ENCODE measurements at regions of chr1 and their contacts with region 1.

Region 1: GRCh38 chr1:119808972-119809550 is 2.2 kb downstream of the REG4 start:
- DNase-seq: peak; percentile 69
- ATAC-seq: peak; percentile 91
- H3K4me3 ChIP-seq: no peak overlapping the region
- H3K27ac ChIP-seq: no peak overlapping the region
- H3K4me1 ChIP-seq: 0 out of 2 replicates have a peak, but pooled peaks cover 3% of the 10 kb centered on the region
- H3K27me3 ChIP-seq: peaks cover 12% of the 10 kb centered on the region
- CTCF ChIP-seq: peak; percentile 83
- POLR2A ChIP-seq: no peak
- RAD21 ChIP-seq: peak; percentile 87

Region 2: GRCh38 chr1:119318466-119319309 is 490.4 kb before region 1 on chr1:
- CTCF ChIA-PET with region 1: no interaction called
- POLR2A ChIA-PET with region 1: no interaction called
- dilution Hi-C with region 1: no loop called
- in situ Hi-C with region 1: no loop called
- intact Hi-C with region 1: no loop called
- DNase-seq: no peak
- ATAC-seq: no peak
- H3K4me3 ChIP-seq: no peak overlapping the region
- H3K27ac ChIP-seq: no peak overlapping the region
- H3K4me1 ChIP-seq: no peaks in the 10 kb centered on the region
- H3K27me3 ChIP-seq: peaks cover 1% of the 10 kb centered on the region; the same call in 1 of the 2 replicates
- CTCF ChIP-seq: no peak
- POLR2A ChIP-seq: no peak
- RAD21 ChIP-seq: no peak

Region 3: DNA sequence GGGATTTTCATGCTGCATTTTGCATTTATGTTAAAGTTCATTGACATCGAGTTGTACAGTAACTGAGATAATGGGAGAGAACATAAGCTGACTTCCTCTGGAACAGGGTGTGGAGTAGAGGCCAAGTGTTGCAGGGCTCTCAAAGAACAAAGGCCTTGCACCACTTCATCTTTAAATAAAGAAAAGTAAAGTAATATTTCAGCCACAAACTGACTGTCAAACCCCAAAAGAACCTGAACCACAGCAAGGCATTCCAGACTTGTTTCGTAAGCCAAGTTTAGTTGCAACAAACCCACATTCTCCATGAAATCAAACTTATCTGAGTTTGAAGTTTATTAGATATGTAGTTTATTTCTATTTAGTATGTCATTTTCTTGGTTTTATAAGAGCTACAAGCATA is 21.3 kb before region 1 on chr1:
- CTCF ChIA-PET with region 1: no interaction called
- POLR2A ChIA-PET with region 1: no interaction called
- dilution Hi-C with region 1: no loop called
- in situ Hi-C with region 1: no loop called
- intact Hi-C with region 1: loop called (anchors 2 kb)
- DNase-seq: peak; percentile 63
- ATAC-seq: 0 out of 2 replicates have a peak, but pooled peaks have one; percentile 40
- H3K4me3 ChIP-seq: no peak overlapping the region
- H3K27ac ChIP-seq: no peak overlapping the region
- H3K4me1 ChIP-seq: peaks cover 13% of the 10 kb centered on the region
- H3K27me3 ChIP-seq: no peaks in the 10 kb centered on the region
- CTCF ChIP-seq: no peak
- POLR2A ChIP-seq: no peak
- RAD21 ChIP-seq: no peak

Region 4: GRCh38 chr1:119870917-119871596 is 62.0 kb after region 1 on chr1:
- CTCF ChIA-PET with region 1: interaction called, 4 read pairs
- POLR2A ChIA-PET with region 1: no interaction called
- dilution Hi-C with region 1: no loop called
- in situ Hi-C with region 1: no loop called
- intact Hi-C with region 1: loop called (anchors 2 kb)
- DNase-seq: peak; percentile 72
- ATAC-seq: peak; percentile 90
- H3K4me3 ChIP-seq: no peak overlapping the region
- H3K27ac ChIP-seq: no peak overlapping the region
- H3K4me1 ChIP-seq: peaks cover 14% of the 10 kb centered on the region; the same call in 1 of the 2 replicates
- H3K27me3 ChIP-seq: no peaks in the 10 kb centered on the region
- CTCF ChIP-seq: peak; percentile 94
- POLR2A ChIP-seq: 0 out of 2 replicates have a peak, but pooled peaks have one; percentile 34
- RAD21 ChIP-seq: peak; percentile 96

Region 5: GRCh38 chr1:119943216-119943615 is 134.2 kb after region 1 on chr1:
- CTCF ChIA-PET with region 1: interaction called, 4 read pairs
- POLR2A ChIA-PET with region 1: no interaction called
- dilution Hi-C with region 1: no loop called
- in situ Hi-C with region 1: no loop called
- intact Hi-C with region 1: loop called (anchors 5 kb)
- DNase-seq: no peak
- ATAC-seq: no peak
- H3K4me3 ChIP-seq: no peak overlapping the region
- H3K27ac ChIP-seq: no peak overlapping the region
- H3K4me1 ChIP-seq: peaks cover 5% of the 10 kb centered on the region
- H3K27me3 ChIP-seq: no peaks in the 10 kb centered on the region
- CTCF ChIP-seq: no peak
- POLR2A ChIP-seq: no peak
- RAD21 ChIP-seq: no peak

Measured in IMR-90 (cell line).